K562 (cell line): ENCODE measurements at regions of chr19 and their contacts with region 1.

Region 1: DNA sequence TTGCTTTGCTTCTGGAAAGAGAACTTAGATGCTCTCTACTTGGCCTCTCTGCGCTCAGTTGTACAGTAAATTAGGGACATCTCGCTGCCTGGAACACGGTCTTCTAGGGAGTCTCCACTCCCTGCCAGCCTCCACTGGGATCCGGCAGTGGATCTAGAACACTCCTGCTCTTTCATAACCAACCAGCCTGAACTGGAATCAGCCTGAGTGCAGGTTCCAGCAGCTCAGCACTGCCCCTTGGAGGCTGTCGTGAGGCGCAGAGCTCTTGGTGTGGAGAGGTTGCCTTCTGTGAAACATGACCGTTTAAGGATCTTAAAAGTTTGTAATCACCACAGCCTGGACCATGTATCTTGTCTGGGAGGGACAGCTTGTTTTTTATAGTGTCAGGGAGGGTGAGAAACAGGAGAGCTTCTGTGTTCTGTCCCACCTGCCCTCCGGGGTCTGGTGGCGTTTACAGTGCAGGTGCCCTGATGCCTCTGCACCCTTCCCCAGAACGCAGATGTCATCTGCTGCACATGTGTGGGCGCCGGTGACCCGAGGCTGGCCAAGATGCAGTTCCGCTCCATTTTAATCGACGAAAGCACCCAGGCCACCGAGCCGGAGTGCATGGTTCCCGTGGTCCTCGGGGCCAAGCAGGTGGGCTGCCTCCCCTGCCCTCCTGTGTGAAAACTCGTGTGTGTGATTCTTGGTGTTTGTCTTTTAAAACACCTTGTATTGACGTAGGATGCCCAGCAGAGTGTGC is 24.8 kb downstream of the UPF1 start:
- DNase-seq: peak in 1 of 4 experiments; percentile 40
- ATAC-seq: peak; percentile 65
- H3K4me3 ChIP-seq: no peak overlapping the region
- H3K27ac ChIP-seq: no peak overlapping the region
- H3K4me1 ChIP-seq: peaks cover 0 to 25% of the 10 kb centered on the region in 2 experiments; a peak in 1 of 5 replicates
- H3K27me3 ChIP-seq: no peaks in the 10 kb centered on the region
- CTCF ChIP-seq: peak; percentile 24 to 40 (median 39); a peak in 4 of 6 replicates
- EP300 ChIP-seq: no peak
- POLR2A ChIP-seq: no peak
- RAD21 ChIP-seq: no peak

Region 2: DNA sequence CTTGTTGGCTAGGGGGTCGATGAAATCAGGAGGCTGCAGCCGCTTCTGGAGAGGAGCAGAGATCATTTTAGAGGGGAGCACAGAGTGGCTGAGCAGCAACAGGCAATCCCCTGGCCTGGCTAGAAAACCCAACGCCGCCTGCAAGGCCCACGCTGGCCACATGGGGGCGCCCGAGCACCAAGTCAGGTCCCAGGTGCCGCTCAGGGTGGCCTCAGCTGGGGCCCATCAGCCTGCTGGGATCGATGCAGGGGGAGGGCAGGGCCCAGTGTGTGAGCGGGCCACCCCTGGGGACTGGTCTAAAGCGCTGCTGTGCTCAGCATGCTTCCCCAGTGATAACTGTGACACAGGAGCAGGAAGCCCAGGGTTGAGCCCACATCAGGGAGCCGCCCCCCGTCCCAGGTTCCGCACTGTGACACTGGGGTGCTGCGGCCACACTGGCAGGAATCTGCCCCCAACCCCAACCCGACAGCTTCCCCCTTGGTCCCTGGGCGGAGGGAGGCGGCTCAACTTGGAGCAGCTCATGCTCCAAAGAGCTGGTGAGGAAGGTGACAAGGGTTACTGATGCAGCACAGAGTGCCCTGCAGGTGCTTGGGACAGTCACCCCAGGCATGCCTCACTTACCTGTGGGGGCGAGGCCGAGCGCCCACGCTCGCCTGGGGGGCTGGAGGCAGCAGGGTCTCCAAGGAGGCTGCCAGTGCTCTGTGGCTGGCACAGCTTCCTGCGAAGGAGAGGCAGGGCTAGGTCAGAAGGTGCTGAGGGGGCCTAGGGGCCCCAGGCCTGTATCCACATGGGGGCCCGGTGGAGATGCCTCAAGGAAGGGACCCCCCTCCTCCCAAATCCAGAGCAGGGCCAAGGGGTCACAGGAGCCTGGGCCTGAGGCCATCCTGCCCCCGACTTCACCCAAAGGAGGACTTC is 405.4 kb before region 1 on chr19:
- CTCF ChIA-PET with region 1: no interaction called
- POLR2A ChIA-PET with region 1: no interaction called
- in situ Hi-C with region 1: loop called (anchors 5 kb)
- intact Hi-C with region 1: no loop called
- DNase-seq: peak; percentile 81 to 91 (median 86)
- ATAC-seq: peak; percentile 97
- H3K4me3 ChIP-seq: no peak overlapping the region
- H3K27ac ChIP-seq: no peak overlapping the region
- H3K4me1 ChIP-seq: peaks cover 0 to 38% of the 10 kb centered on the region in 2 experiments; a peak in 2 of 5 replicates
- H3K27me3 ChIP-seq: no peaks in the 10 kb centered on the region
- CTCF ChIP-seq: peak; percentile 92 to 94 (median 93)
- EP300 ChIP-seq: no peak
- POLR2A ChIP-seq: no peak
- RAD21 ChIP-seq: peak; percentile 79 to 86

Region 3: GRCh38 chr19:18839465-18840287 is 16.9 kb before region 1 on chr19:
- CTCF ChIA-PET with region 1: no interaction called
- POLR2A ChIA-PET with region 1: interaction called, 12 read pairs
- in situ Hi-C with region 1: no loop called
- intact Hi-C with region 1: no loop called
- DNase-seq: no peak
- ATAC-seq: peak; percentile 13
- H3K4me3 ChIP-seq: no peak overlapping the region
- H3K27ac ChIP-seq: no peak overlapping the region
- H3K4me1 ChIP-seq: peaks cover 12 to 30% of the 10 kb centered on the region in 2 experiments
- H3K27me3 ChIP-seq: no peaks in the 10 kb centered on the region
- CTCF ChIP-seq: no peak
- EP300 ChIP-seq: no peak
- POLR2A ChIP-seq: no peak
- RAD21 ChIP-seq: no peak